ENCODE measurements at regions of chr1 and their contacts with region 1.

Region 1: GRCh38 chr1:187313133-187313532 is 484.4 kb downstream of the PLA2G4A start:
- DNase-seq: no peak
- ATAC-seq: no peak
- H3K4me3 ChIP-seq: no peak overlapping the region
- H3K27ac ChIP-seq: no peak overlapping the region
- H3K4me1 ChIP-seq: no peaks in the 10 kb centered on the region
- H3K27me3 ChIP-seq: no peaks in the 10 kb centered on the region
- CTCF ChIP-seq: no peak
- EP300 ChIP-seq: no peak
- POLR2A ChIP-seq: no peak
- RAD21 ChIP-seq: no peak

Region 2: GRCh38 chr1:187294421-187295201 is 18.5 kb before region 1 on chr1:
- CTCF ChIA-PET with region 1: no interaction called
- POLR2A ChIA-PET with region 1: no interaction called
- RAD21 ChIA-PET with region 1: no interaction called
- SMC1A ChIA-PET with region 1: no interaction called
- in situ Hi-C with region 1: no loop called
- intact Hi-C with region 1: loop called (anchors 2 kb)
- DNase-seq: no peak
- ATAC-seq: no peak
- H3K4me3 ChIP-seq: no peak overlapping the region
- H3K27ac ChIP-seq: no peak overlapping the region
- H3K4me1 ChIP-seq: no peaks in the 10 kb centered on the region
- H3K27me3 ChIP-seq: no peaks in the 10 kb centered on the region
- CTCF ChIP-seq: no peak
- EP300 ChIP-seq: no peak
- POLR2A ChIP-seq: no peak
- RAD21 ChIP-seq: no peak